BJ (cell line): ENCODE measurements at regions of chr16 and their contacts with region 1.

Region 1: GRCh38 chr16:67017810-67018488 is 11.0 kb upstream of the CBFB start:
- DNase-seq: peak; percentile 44
- H3K4me3 ChIP-seq: no peak overlapping the region
- H3K27me3 ChIP-seq: no peaks in the 10 kb centered on the region
- CTCF ChIP-seq: peak; percentile 72

Region 2: DNA sequence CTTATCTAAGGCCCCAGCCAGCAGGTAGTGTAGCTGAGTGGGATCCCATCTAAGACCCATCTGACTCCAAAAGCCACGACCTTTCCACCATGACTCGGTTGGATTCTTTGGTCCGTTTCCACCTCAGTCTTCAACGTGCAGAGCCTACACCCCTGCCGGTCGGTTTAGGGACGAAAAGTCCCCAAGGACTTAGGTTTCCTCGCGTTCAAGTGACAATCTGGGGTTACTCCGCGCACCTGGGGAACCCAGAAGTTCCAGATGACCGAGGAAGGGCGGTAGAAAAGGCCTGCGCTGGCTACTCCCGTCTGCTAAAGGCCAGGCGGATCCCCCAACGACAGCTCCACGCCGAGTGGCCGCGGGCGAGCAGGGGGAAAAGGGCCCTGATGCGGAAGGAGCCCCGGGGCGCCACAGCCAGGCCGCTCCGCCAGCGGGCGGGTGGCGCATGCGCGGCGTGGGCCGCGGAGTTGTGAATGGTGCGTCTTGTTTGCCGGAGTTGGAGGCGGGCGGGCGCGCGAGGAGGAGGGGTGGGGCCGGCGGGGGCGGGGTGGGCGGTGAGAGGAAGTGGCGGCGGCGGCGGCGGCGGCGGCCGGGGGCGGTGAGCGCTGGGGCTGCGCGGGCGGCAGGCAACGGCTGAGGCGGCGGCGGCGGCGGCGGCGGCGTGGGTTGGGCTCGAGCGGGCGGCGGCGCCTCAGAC is 10.8 kb after region 1 on chr16 and contains the start of gene CBFB:
- CTCF ChIA-PET with region 1: interaction called, 26 read pairs
- POLR2A ChIA-PET with region 1: no interaction called
- DNase-seq: peak; percentile 40
- H3K4me3 ChIP-seq: peak within 1 kb of the TSS; percentile 81
- H3K27me3 ChIP-seq: no peaks in the 10 kb centered on the region
- CTCF ChIP-seq: 0 out of 2 replicates have a peak, but pooled peaks have one; percentile 10
- polyA plus RNA-seq, gene CBFB: 14.7 and 28.4 TPM in 2 replicates

Region 3: DNA sequence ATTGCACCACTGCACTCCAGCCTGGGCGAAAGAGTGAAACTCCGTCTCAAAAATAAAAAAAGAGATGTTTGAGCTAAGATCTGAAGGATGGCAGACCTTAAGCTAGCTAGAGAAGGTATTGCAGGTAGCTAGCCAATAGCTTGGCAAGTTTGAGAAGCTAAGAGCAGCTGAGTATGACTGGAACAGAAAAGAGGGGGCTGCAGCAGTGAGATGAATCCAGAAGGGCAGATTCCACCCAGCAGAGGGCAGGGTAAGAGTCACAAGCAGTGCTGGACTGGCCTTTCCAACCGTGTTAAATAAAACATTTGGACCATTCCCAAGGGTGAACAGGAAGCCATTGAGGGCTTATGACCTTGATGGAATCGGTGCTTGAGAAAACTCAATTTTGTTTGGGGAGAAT is 86.1 kb after region 1 on chr16:
- CTCF ChIA-PET with region 1: interaction called, 67 read pairs
- POLR2A ChIA-PET with region 1: no interaction called
- DNase-seq: no peak
- H3K4me3 ChIP-seq: no peak overlapping the region
- H3K27me3 ChIP-seq: no peaks in the 10 kb centered on the region
- CTCF ChIP-seq: peak; percentile 45

Region 4: GRCh38 chr16:67144943-67145342 is 127.0 kb after region 1 on chr16:
- CTCF ChIA-PET with region 1: interaction called, 12 read pairs
- POLR2A ChIA-PET with region 1: interaction called, 3 read pairs
- DNase-seq: no peak
- H3K4me3 ChIP-seq: no peak overlapping the region
- H3K27me3 ChIP-seq: no peaks in the 10 kb centered on the region
- CTCF ChIP-seq: no peak

Region 5: DNA sequence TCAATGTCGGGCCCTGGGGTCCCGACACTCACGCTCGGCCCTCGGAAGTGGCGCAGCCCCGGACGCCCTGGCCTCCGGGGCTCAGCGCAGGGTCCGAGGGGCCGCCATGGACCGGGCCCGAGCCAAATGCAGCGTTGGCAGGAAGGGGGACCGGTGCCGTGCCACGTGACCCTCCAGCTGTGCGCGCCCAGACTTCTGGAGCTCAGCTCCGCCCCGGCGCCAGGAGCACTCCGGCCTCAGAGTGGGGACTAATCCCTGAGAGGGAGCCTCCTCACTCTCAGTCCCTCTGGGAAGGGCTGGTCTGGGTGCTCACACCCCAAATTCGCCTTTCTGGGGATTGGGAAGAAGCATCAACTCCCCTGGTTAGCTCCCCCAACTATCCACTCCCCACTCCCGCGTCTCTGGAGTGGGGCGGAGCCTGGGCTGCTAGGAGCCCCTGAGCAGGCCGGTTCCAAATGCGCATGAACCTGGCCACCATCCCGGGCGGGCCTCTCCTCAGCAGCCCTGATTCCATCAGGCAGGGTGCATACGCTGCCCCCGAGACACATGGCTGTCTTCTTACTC is 133.0 kb after region 1 on chr16 and contains the start of gene B3GNT9:
- CTCF ChIA-PET with region 1: interaction called, 118 read pairs
- POLR2A ChIA-PET with region 1: interaction called, 3 read pairs
- DNase-seq: no peak
- H3K4me3 ChIP-seq: peak within 1 kb of the TSS; percentile 83
- H3K27me3 ChIP-seq: no peaks in the 10 kb centered on the region
- CTCF ChIP-seq: no peak
- polyA plus RNA-seq, gene B3GNT9: 25.7 and 34.9 TPM in 2 replicates

Region 6: GRCh38 chr16:67173808-67174705 is 156.1 kb after region 1 on chr16:
- CTCF ChIA-PET with region 1: interaction called, 3 read pairs
- POLR2A ChIA-PET with region 1: interaction called, 15 read pairs
- DNase-seq: no peak
- H3K4me3 ChIP-seq: peak overlapping the region; percentile 48
- H3K27me3 ChIP-seq: no peaks in the 10 kb centered on the region
- CTCF ChIP-seq: peak; percentile 46

Region 7: DNA sequence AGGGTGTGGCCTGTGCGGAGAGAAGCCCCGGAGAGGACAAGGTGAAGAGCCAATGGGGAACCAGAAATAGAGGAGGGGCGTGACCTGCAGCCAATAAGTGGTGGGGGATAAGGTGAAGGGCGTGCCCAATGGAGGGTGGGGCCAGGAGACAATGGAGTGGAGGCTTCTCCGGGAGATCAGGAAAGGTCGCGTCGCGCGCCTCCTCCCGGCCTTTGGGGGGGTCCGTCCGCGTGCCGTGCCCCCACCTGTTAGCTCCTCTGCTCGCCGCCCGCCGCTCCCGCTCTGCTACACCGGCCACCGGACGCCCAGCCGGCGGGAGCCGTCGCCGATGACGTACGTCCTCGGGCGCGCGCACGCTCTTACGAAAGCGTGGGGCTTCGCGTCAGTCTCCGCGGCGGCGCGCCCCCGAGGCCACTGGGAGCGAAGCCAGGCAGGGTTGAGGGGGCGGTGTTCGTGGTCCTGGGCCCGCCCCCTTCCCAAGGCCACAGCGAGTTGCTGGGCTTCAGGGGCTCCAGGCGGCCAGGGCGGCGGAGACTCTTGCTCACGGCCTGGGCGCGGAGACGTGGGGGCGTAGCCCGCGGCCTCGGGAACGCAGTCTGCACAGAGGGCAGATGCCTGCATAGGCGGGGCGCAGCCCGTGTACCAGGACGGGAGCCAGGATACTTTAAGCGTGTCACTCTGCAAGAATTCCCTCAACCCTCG is 165.8 kb after region 1 on chr16 and contains the start of gene MATCAP1:
- CTCF ChIA-PET with region 1: interaction called, 10 read pairs
- POLR2A ChIA-PET with region 1: no interaction called
- DNase-seq: peak; percentile 83
- H3K4me3 ChIP-seq: peak within 1 kb of the TSS; percentile 60
- H3K27me3 ChIP-seq: no peaks in the 10 kb centered on the region
- CTCF ChIP-seq: no peak
- polyA plus RNA-seq, gene MATCAP1: 8.7 and 13.1 TPM in 2 replicates